Activated CD4-positive, alpha-beta T cell treated with anti-CD3 and anti-CD28 coated beads, Interleukin-2, amount 10 ng/mL, durations not matched to agents 7 days and 5 days (primary cell): ENCODE measurements at regions of chr16 and their contacts with region 1.

Region 1: GRCh38 chr16:4624015-4624826 is at the start of gene MGRN1:
- DNase-seq: peak; percentile 95
- H3K4me3 Mint-ChIP-seq: peak within 1 kb of the TSS; percentile 90
- H3K27ac Mint-ChIP-seq: peak within 1 kb of the TSS; percentile 100
- H3K4me1 Mint-ChIP-seq: peaks cover 36% of the 10 kb centered on the region
- H3K27me3 Mint-ChIP-seq: no peaks in the 10 kb centered on the region
- total RNA-seq, gene MGRN1: 74.4 to 79.5 TPM

Region 2: DNA sequence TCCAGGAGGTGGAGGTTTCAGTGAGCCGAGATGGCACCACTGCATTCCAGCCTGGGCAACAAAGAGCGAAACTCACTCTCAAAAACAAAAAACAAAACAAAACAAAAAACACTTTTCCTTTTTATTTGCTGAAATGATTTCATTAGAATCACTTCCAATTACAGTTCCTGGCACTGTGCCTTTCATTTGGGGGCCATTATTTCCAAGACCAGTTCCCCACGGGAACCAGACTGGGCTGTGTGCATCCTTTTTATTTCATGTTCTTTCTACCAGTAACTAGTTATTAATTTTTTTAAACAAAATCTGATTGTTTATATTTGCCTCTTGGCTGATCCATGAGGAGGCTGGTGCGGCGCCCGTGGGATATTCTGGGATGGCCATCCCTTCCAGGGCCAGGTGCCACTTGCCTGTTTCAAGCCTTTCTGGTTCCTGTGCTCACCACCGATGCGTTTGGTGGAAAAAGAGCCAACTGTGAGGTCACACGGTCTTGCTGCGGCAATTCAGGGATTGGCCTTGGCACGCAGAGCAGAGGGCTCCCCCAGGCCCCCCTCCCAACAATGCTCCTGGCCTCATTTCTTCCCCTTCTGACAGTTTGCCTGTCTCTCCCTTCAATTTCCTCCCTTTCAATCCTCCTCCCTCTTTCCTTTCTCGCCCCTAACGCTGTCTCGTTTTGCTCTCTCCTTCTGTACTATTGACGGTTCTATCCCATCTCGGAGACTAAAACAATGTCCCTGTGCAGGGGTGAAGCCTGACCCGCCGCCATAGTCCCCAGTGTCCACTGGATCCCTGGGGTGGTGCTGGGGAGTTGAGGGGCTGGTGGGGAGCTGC is 23.0 kb before region 1 on chr16:
- CTCF ChIA-PET with region 1: no interaction called
- POLR2A ChIA-PET with region 1: no interaction called
- DNase-seq: no peak
- H3K4me3 Mint-ChIP-seq: no peak overlapping the region
- H3K27ac Mint-ChIP-seq: peak overlapping the region; percentile 19
- H3K4me1 Mint-ChIP-seq: no peaks in the 10 kb centered on the region
- H3K27me3 Mint-ChIP-seq: peaks cover 5% of the 10 kb centered on the region

Region 3: DNA sequence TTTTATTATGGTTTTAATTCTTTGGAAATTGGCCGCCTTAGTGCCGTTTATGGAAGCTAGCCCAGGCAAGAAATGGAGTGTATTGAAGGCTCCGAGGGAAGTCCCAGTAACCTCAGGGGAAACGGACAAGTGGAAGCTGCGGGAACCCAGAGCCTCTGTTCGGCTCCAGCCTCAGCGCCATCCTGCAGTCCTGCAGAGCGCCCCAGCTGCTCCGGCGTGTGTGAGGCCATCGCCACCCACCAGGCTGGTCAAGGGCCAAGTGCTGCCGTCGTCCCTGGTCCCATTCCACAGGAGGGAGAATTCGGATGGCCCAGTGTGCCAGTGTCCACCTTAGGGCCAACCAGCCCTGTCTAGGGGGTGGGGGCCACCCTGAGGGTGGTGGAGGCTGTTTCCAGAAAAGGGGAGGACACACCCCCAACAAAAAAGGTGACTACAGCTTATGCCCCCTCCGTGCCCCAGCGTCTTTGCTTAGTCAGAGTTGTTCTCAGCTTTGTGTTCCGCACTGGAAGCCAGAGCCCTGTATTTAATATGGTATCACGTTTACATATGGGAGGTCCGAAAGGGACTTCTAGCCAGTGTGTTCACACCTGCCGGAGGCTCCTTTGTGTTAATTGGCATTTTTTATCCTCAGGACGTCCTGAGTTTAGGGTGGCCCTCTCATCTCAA is 13.4 kb after region 1 on chr16:
- CTCF ChIA-PET with region 1: interaction called, 40 read pairs
- POLR2A ChIA-PET with region 1: interaction called, 5 read pairs
- DNase-seq: no peak
- H3K4me3 Mint-ChIP-seq: no peak overlapping the region
- H3K27ac Mint-ChIP-seq: no peak overlapping the region
- H3K4me1 Mint-ChIP-seq: peaks cover 19% of the 10 kb centered on the region
- H3K27me3 Mint-ChIP-seq: no peaks in the 10 kb centered on the region

Region 4: GRCh38 chr16:4775005-4775404 is 150.8 kb after region 1 on chr16:
- CTCF ChIA-PET with region 1: no interaction called
- POLR2A ChIA-PET with region 1: no interaction called
- DNase-seq: no peak
- H3K4me3 Mint-ChIP-seq: no peak overlapping the region
- H3K27ac Mint-ChIP-seq: no peak overlapping the region
- H3K4me1 Mint-ChIP-seq: no peaks in the 10 kb centered on the region
- H3K27me3 Mint-ChIP-seq: no peaks in the 10 kb centered on the region